ENCODE measurements at regions of chr15 and their contacts with region 1.

Region 1: GRCh38 chr15:100341662-100342560 is at the start of gene ADAMTS17:
- DNase-seq: peak; percentile 95
- ATAC-seq: peak; percentile 95
- H3K4me3 Mint-ChIP-seq: peak within 1 kb of the TSS; percentile 35
- H3K27ac Mint-ChIP-seq: no peak within 1 kb of the TSS
- H3K4me1 Mint-ChIP-seq: peaks cover 15% of the 10 kb centered on the region
- H3K27me3 Mint-ChIP-seq: peaks cover 49% of the 10 kb centered on the region
- total RNA-seq, gene ADAMTS17: 1.6 to 1.9 TPM

Region 2: GRCh38 chr15:99928429-99928981 is 413.4 kb before region 1 on chr15:
- CTCF ChIA-PET with region 1: interaction called, 58 read pairs
- DNase-seq: peak; percentile 89
- ATAC-seq: peak; percentile 96
- H3K4me3 Mint-ChIP-seq: peak overlapping the region; percentile 75
- H3K27ac Mint-ChIP-seq: peak overlapping the region; percentile 68
- H3K4me1 Mint-ChIP-seq: peaks cover 13% of the 10 kb centered on the region
- H3K27me3 Mint-ChIP-seq: peaks cover 33% of the 10 kb centered on the region

Region 3: GRCh38 chr15:100330629-100331215 is 11.2 kb before region 1 on chr15:
- CTCF ChIA-PET with region 1: interaction called, 127 read pairs
- DNase-seq: peak; percentile 78
- ATAC-seq: peak; percentile 86
- H3K4me3 Mint-ChIP-seq: peak overlapping the region; percentile 28
- H3K27ac Mint-ChIP-seq: peak overlapping the region; percentile 80
- H3K4me1 Mint-ChIP-seq: peaks cover 37% of the 10 kb centered on the region
- H3K27me3 Mint-ChIP-seq: peaks cover 5% of the 10 kb centered on the region

Measured in activated CD8-positive, alpha-beta memory T cell treated with anti-CD3 and anti-CD28 coated beads, Interleukin-2, amount 10 ng/mL, durations not matched to agents 7 days and 5 days (primary cell).